ENCODE measurements at regions of chr4 and their contacts with region 1.

Region 1: GRCh38 chr4:68375667-68376559 is 26.0 kb upstream of the YTHDC1 start:
- DNase-seq: no peak
- H3K4me3 ChIP-seq: peak overlapping the region; percentile 39
- H3K27ac ChIP-seq: no peak overlapping the region
- H3K27me3 ChIP-seq: no peaks in the 10 kb centered on the region
- CTCF ChIP-seq: peak; percentile 95

Region 2: DNA sequence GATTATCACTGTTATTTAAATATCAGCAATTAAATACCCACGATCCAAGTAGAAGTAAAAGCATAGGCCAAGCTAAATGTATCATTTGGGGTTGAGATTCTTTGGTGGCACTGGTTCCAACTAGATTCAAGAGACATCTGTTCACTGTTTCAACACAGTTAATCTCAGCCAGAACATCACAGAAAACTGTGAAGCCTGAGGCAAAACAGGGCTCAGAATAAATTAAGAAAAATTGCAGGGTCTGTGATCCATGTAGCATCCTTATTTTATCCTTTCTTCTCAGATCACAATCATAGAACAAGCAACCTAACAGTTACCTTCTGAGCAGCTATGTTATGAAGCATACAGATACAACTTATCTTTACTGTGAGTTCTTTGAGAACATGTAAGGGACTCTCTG is 49.8 kb before region 1 on chr4:
- CTCF ChIA-PET with region 1: interaction called, 25 read pairs
- POLR2A ChIA-PET with region 1: no interaction called
- DNase-seq: no peak
- H3K4me3 ChIP-seq: no peak overlapping the region
- H3K27ac ChIP-seq: no peak overlapping the region
- H3K27me3 ChIP-seq: no peaks in the 10 kb centered on the region
- CTCF ChIP-seq: no peak

Region 3: DNA sequence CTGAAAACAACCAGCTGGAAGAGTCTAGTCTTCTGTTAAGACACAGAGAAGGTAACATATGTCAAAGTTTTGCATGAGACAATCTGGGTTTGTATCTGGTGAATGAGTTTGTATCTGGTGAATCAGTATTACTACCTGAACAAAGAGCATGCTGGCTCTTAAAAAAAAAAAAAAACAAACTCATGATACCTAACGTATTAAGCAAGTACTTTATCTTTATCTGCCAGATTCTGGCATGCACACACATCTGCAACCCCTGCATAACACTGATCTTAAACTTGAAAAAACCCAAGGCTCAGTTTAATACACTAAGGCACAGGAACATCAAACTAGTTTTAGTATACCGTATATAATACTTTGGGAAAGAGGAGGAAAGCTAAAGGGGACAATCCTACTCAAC is 31.9 kb before region 1 on chr4:
- CTCF ChIA-PET with region 1: interaction called, 22 read pairs
- POLR2A ChIA-PET with region 1: no interaction called
- DNase-seq: no peak
- H3K4me3 ChIP-seq: no peak overlapping the region
- H3K27ac ChIP-seq: no peak overlapping the region
- H3K27me3 ChIP-seq: no peaks in the 10 kb centered on the region
- CTCF ChIP-seq: no peak

Region 4: DNA sequence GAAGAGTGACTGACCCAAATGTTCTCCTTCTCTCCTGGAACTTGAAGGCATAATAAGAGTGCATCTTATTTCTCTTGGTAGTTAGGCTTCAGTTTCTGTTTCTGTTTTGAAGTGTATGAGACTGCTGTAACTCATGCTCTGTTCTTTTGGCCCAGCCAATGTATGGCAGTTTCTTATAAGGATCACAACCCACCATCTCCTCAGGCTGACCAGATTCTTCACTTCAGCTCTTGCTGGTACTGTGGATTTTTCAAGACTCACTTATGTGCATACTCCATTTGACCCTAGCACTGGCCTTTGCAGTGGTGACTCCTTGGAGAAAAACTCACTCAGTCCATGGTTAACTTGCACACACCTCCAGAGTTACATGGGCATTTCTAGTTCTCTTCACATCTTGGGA is 16.4 kb before region 1 on chr4:
- CTCF ChIA-PET with region 1: interaction called, 15 read pairs
- POLR2A ChIA-PET with region 1: no interaction called
- DNase-seq: no peak
- H3K4me3 ChIP-seq: no peak overlapping the region
- H3K27ac ChIP-seq: no peak overlapping the region
- H3K27me3 ChIP-seq: no peaks in the 10 kb centered on the region
- CTCF ChIP-seq: no peak